ENCODE measurements at regions of chr3 and their contacts with region 1.

Region 1: GRCh38 chr3:157436583-157437291 is at the start of gene PTX3:
- DNase-seq: peak; percentile 85
- H3K4me3 ChIP-seq: peak within 1 kb of the TSS; percentile 68 to 93 (median 79)
- H3K27ac ChIP-seq: peak within 1 kb of the TSS; percentile 74
- H3K4me1 ChIP-seq: peaks cover 31% of the 10 kb centered on the region
- H3K27me3 ChIP-seq: no peaks in the 10 kb centered on the region
- CTCF ChIP-seq: no peak
- POLR2A ChIP-seq: peak; percentile 89
- total RNA-seq, gene PTX3: 149 and 172 TPM in 2 replicates

Region 2: GRCh38 chr3:157159762-157160657 is 276.7 kb before region 1 on chr3 and contains the start of gene CCNL1:
- CTCF ChIA-PET with region 1: no interaction called
- POLR2A ChIA-PET with region 1: no interaction called
- dilution Hi-C with region 1: no loop called
- intact Hi-C with region 1: loop called (anchors 2 kb)
- DNase-seq: peak; percentile 96
- H3K4me3 ChIP-seq: peak within 1 kb of the TSS; percentile 41 to 97 (median 66)
- H3K27ac ChIP-seq: peak within 1 kb of the TSS; percentile 94
- H3K4me1 ChIP-seq: peaks cover 50% of the 10 kb centered on the region
- H3K27me3 ChIP-seq: no peaks in the 10 kb centered on the region
- CTCF ChIP-seq: no peak
- POLR2A ChIP-seq: peak; percentile 98
- total RNA-seq, gene CCNL1: 116 and 119 TPM in 2 replicates

Region 3: DNA sequence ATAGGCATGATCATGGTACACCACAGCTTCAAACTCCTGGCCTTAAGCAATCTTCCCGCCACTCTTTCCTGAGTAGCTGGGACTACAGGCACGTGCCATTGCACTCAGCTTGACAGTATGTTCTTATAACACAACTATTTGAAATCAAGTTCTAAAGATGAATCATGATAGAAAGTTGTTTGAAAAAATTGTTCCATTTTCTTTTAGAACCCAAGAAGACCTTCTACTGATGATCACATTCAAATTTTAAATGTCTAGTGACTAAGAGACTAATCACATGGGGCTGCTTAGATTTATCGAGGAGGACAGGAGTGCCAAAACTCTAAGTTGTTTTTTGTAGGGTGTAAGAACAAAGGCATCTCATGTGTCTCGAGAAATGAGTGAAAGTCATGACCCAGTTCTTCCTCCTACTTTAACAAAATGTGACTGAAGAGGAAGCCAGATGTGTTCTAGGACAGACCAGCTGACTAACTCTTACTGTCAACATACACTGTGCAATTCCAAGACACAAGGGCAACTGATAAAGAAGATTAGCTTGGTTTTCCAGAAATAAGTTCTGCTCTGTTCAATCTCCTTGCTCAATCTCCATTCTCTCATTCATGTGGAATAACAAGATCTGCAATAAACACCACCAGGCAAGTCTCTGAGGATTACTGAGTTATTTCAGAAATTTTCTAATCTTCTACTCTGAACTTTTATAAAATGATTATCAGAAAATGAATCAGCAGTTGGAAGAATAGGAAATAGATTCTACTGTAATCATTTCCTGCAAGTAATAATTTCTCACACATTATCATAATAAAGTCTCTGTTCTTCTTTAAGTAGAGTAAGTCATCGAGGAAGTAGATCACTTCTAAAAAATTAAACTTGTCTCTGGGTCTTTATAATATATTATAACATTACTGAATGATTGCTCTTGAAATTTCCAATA is 154.2 kb before region 1 on chr3:
- CTCF ChIA-PET with region 1: no interaction called
- POLR2A ChIA-PET with region 1: interaction called, 4 read pairs
- dilution Hi-C with region 1: no loop called
- intact Hi-C with region 1: loop called (anchors 1 kb)
- DNase-seq: peak; percentile 94
- H3K4me3 ChIP-seq: peak overlapping the region in 1 of 3 experiments; percentile 41
- H3K27ac ChIP-seq: peak overlapping the region; percentile 74
- H3K4me1 ChIP-seq: peaks cover 64% of the 10 kb centered on the region
- H3K27me3 ChIP-seq: no peaks in the 10 kb centered on the region
- CTCF ChIP-seq: no peak
- POLR2A ChIP-seq: no peak

Region 4: DNA sequence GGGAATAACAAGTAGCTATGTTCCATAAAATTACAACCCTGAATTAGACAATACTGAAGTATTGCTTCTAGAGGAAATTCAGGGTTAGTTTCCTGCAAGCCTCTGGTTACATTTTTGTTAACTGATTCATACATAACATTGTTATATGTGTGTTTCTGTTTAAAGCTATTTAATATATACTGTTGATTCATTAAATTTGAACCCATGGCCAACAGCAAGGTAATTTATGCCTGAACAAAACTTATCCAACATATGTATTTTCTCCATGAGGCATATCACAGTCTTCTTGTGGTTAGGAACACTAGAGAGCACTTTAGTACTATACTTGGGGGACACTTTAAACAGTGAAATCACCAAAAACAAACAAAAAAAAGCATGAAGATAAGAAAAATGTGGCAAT is 47.8 kb before region 1 on chr3:
- CTCF ChIA-PET with region 1: interaction called, 6 read pairs
- POLR2A ChIA-PET with region 1: interaction called, 3 read pairs
- dilution Hi-C with region 1: no loop called
- intact Hi-C with region 1: loop called (anchors 2 kb)
- DNase-seq: peak; percentile 61
- H3K4me3 ChIP-seq: no peak overlapping the region
- H3K27ac ChIP-seq: peak overlapping the region; percentile 47
- H3K4me1 ChIP-seq: peaks cover 21% of the 10 kb centered on the region
- H3K27me3 ChIP-seq: no peaks in the 10 kb centered on the region
- CTCF ChIP-seq: no peak
- POLR2A ChIP-seq: no peak

Region 5: DNA sequence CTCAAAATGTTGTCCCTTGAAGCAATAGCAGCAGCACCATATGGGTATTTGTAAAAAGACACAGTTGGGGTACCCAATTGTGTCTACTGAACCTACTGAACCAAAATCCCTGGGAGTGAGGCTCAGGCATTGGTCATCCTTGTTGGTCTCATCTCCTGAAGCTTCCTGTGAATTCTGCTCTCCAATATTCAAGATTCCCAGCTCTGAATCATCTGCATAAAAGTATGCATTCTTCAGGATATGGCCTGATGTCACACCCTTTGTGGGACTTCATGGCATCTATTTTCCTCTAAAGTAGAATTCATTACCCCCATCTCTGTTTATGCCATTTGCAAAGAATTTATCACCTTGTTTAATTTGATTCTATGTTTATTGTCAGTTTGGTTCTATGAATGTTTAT is 13.4 kb before region 1 on chr3:
- CTCF ChIA-PET with region 1: interaction called, 4 read pairs
- POLR2A ChIA-PET with region 1: interaction called, 12 read pairs
- dilution Hi-C with region 1: no loop called
- intact Hi-C with region 1: loop called (anchors 1 kb)
- DNase-seq: no peak
- H3K4me3 ChIP-seq: no peak overlapping the region
- H3K27ac ChIP-seq: no peak overlapping the region
- H3K4me1 ChIP-seq: peaks cover 23% of the 10 kb centered on the region
- H3K27me3 ChIP-seq: no peaks in the 10 kb centered on the region
- CTCF ChIP-seq: no peak
- POLR2A ChIP-seq: no peak

Measured in endothelial cell of umbilical vein (primary cell).